ENCODE measurements at regions of chr17 and their contacts with region 1.

Region 1: GRCh38 chr17:55421179-55421934 is at the start of gene MMD:
- DNase-seq: no peak
- ATAC-seq: no peak
- H3K4me3 Mint-ChIP-seq: peak within 1 kb of the TSS; percentile 93
- H3K27ac Mint-ChIP-seq: peak within 1 kb of the TSS; percentile 98
- H3K4me1 Mint-ChIP-seq: peaks cover 71% of the 10 kb centered on the region
- H3K27me3 Mint-ChIP-seq: no peaks in the 10 kb centered on the region
- CTCF ChIP-seq: no peak
- total RNA-seq, gene MMD: 45.5 and 46.3 TPM in 2 replicates

Region 2: DNA sequence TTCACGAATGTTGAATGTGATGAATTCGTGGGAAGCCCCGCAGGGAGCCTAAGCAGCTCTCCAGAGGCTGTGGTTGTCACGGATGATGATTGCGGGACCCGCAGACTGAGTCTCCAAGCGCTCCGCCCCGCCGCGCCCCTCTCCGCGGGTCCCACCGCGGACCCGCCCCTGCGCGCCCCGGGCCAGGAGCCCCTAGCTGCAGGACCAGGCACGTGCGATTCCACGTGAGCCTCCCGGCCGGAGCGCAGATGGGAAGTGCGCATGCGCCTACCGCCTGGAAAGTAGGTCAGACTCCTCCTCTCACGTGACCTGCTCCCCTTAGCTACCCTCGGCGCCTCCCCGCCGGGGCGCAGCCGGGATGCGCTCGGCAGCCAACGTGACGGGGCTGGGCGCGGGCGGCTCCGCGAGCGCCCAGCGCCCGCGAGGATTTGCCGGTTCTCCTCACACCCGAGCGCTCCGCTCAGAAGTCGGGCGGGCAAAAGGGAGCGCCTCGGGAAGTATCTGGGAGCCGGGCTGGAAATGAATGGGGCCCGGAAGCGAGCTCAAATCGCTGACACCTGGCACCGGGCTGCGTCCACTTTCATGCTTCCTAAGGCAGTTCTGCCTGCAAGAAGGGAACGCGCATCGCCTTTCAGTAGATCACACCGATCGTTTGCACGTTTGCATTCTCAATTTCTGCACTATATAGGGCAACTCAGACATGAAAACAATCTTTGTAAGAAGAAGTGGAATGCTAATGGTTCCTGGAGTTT is 183.0 kb before region 1 on chr17:
- CTCF ChIA-PET with region 1: no interaction called
- POLR2A ChIA-PET with region 1: no interaction called
- intact Hi-C with region 1: loop called (anchors 10 kb)
- DNase-seq: peak; percentile 62
- ATAC-seq: peak; percentile 84
- H3K4me3 Mint-ChIP-seq: peak overlapping the region; percentile 79
- H3K27ac Mint-ChIP-seq: no peak overlapping the region
- H3K4me1 Mint-ChIP-seq: peaks cover 35% of the 10 kb centered on the region
- H3K27me3 Mint-ChIP-seq: peaks cover 24% of the 10 kb centered on the region
- CTCF ChIP-seq: no peak

Region 3: GRCh38 chr17:55444471-55445441 is 23.4 kb after region 1 on chr17:
- CTCF ChIA-PET with region 1: interaction called, 3 read pairs
- POLR2A ChIA-PET with region 1: interaction called, 14 read pairs
- intact Hi-C with region 1: loop called (anchors 1 kb)
- DNase-seq: no peak
- ATAC-seq: peak; percentile 91
- H3K4me3 Mint-ChIP-seq: peak overlapping the region; percentile 61
- H3K27ac Mint-ChIP-seq: peak overlapping the region; percentile 92
- H3K4me1 Mint-ChIP-seq: peaks cover 29% of the 10 kb centered on the region
- H3K27me3 Mint-ChIP-seq: no peaks in the 10 kb centered on the region
- CTCF ChIP-seq: no peak

Region 4: GRCh38 chr17:55513885-55514591 is 92.7 kb after region 1 on chr17:
- CTCF ChIA-PET with region 1: interaction called, 7 read pairs
- POLR2A ChIA-PET with region 1: interaction called, 4 read pairs
- intact Hi-C with region 1: loop called (anchors 1 kb)
- DNase-seq: peak; percentile 54
- ATAC-seq: peak; percentile 69
- H3K4me3 Mint-ChIP-seq: no peak overlapping the region
- H3K27ac Mint-ChIP-seq: no peak overlapping the region
- H3K4me1 Mint-ChIP-seq: peaks cover 4% of the 10 kb centered on the region
- H3K27me3 Mint-ChIP-seq: peaks cover 6% of the 10 kb centered on the region
- CTCF ChIP-seq: no peak

Region 5: DNA sequence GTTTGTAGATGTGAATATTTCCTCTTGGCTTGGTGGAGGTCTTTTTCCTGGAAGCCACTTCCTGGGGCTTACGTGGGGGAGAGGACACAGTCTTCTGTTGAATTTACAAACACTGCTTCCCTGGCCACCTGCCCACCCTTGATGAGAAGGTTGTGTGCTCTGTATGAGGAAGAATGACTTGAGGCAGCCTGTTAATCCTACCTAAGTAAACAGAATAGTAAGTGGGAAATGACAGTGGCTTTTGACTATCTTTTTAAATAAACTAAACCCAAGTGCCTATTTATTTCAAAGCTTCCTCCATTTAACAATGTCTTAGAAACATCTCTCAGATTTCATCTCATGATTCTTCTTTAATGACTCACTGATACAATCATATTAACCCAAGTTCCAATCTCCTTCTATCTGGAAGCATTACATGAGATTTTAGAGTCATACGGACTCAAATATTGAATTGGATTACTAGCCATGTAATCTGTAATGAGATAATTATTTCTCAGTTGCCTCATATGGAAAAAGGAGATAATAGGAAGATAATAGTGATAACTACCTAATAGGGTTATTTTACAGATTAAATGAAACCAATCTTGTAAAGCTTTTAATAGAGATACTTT is 186.5 kb after region 1 on chr17:
- CTCF ChIA-PET with region 1: no interaction called
- POLR2A ChIA-PET with region 1: no interaction called
- intact Hi-C with region 1: no loop called
- DNase-seq: no peak
- ATAC-seq: no peak
- H3K4me3 Mint-ChIP-seq: no peak overlapping the region
- H3K27ac Mint-ChIP-seq: no peak overlapping the region
- H3K4me1 Mint-ChIP-seq: no peaks in the 10 kb centered on the region
- H3K27me3 Mint-ChIP-seq: peaks cover 4% of the 10 kb centered on the region
- CTCF ChIP-seq: no peak

Region 6: DNA sequence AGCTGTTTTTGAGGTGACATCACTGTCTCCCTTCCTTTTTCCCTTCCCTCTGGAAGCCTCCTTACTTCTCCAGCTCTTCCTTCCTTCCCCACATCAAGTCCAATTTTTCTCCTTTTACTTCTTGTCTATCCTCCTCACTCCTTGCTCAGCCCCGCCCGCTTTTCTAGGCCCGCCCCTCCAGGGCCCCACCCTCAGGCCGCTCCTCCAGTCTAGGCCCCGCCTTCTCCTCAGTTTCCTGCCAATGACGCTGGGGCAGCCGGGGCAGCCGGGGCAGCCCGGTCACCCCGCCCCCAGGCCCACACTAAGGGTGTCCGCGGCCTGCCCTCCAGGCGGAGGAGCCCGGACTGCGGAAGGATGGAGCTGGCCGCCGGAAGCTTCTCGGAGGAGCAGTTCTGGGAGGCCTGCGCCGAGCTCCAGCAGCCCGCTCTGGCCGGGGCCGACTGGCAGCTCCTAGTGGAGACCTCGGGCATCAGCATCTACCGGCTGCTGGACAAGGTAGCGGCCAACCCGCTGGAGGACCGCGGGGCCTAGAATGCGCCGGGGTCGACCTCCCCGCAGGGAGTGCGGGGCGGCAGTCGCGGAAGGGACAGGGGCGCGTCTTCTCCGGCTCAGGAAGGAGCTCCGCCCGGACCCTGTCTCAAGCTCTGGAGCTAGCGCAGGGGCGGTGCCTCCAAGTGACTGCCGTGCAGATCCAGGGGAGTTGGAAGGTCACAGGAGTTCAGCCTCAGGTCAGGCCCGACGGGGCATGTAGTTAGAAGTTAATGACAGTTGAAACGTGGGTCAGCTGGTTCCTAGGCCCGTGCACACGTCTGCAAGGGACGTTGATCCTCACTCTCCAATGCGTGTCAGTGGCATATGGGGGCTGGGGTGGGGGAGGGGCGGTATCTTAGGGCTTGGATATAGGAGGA is 329.6 kb after region 1 on chr17 and contains the start of gene PCTP:
- CTCF ChIA-PET with region 1: no interaction called
- POLR2A ChIA-PET with region 1: no interaction called
- intact Hi-C with region 1: loop called (anchors 10 kb)
- DNase-seq: peak; percentile 80
- ATAC-seq: peak; percentile 98
- H3K4me3 Mint-ChIP-seq: peak within 1 kb of the TSS; percentile 84
- H3K27ac Mint-ChIP-seq: no peak within 1 kb of the TSS
- H3K4me1 Mint-ChIP-seq: peaks cover 14% of the 10 kb centered on the region
- H3K27me3 Mint-ChIP-seq: peaks cover 5% of the 10 kb centered on the region
- CTCF ChIP-seq: no peak
- total RNA-seq, gene PCTP: 8.0 and 9.0 TPM in 2 replicates

Measured in activated B cell treated with CpG ODN at 0.5 μM for 24 hours (primary cell).